Dendritic cell treated with granulocyte-macrophage colony-stimulating factor and Interleukin-4, amounts not matched to agents 40 ng/mL and 50 ng/mL, for 4 days (primary cell): ENCODE measurements at regions of chr1 and their contacts with region 1.

Region 1: GRCh38 chr1:206912445-206913095 is 9.2 kb downstream of the FCMR start:
- H3K4me3 Mint-ChIP-seq: no peak overlapping the region
- H3K27ac Mint-ChIP-seq: no peak overlapping the region
- H3K4me1 Mint-ChIP-seq: peaks cover 10% of the 10 kb centered on the region
- H3K27me3 Mint-ChIP-seq: peaks cover 64% of the 10 kb centered on the region

Region 2: DNA sequence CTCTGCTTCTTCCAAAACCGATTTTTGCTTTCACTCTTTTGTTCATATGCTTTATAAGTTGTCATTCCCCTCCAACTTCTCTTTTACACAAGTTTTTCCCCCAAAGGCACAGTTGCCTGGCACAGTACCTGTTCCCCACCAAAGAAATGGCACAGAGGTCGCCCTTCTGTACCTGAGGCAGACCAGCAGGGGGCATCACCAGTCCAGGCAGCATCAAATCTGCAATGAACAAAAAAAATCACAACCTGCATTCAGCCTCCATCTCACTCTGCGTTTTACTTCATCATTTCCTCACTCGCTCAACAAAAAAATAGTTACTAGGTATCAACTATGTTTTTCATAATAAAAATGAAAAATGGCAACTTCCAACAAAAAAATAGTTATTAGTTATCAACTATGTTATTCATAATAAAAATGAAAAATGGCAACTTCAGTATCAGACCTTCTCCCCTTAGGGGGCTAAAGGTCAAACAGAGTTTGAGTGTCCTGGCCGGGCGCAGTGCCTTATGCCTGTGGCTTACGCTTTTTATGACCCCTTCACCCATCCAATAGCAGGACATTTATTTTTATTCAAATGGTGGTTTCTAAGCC is 304.4 kb before region 1 on chr1:
- intact Hi-C with region 1: loop called (anchors 5 kb)
- H3K4me3 Mint-ChIP-seq: no peak overlapping the region
- H3K27ac Mint-ChIP-seq: no peak overlapping the region
- H3K4me1 Mint-ChIP-seq: peaks cover 22% of the 10 kb centered on the region
- H3K27me3 Mint-ChIP-seq: no peaks in the 10 kb centered on the region

Region 3: DNA sequence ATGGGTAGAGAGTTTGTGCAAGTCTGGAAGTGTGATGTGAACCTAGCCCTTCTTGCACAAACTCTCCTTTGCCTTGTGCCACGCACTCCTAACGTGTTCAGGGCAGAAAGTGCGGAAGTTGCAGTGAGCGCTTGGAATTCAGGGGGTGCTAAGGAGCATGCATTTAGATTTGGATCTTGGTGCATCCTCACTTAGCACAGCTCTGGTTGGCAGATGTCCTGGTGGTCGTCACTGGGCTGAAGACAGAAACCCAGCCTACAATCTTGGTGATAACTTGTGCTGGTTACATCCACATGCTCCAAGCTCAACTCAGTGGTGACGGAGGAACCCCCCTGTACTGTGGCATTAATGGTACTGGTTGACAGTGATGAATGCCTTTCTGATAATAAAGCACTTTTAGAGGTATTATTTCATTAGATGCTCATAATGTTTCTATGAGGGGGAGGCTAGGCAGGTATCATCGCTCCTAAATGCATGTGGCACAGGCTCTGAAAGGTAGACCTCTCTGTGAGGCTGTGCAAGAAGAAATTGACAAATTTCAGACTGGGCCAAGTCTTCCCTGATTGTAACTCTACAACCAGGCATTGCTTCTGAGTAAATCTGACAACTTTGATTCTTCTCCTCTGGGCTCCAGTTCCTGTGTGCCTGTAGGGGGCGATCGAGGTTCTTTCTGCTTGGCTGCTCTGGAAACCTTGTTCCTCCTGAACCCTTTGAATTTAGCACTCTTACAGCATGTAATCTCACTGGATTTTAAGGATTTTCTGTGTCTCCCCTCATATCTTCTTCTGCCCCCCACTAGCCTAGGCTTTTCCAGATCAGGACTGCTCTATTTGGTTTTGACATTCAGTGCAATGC is 187.2 kb before region 1 on chr1:
- intact Hi-C with region 1: loop called (anchors 2 kb)
- H3K4me3 Mint-ChIP-seq: no peak overlapping the region
- H3K27ac Mint-ChIP-seq: no peak overlapping the region
- H3K4me1 Mint-ChIP-seq: peaks cover 78% of the 10 kb centered on the region
- H3K27me3 Mint-ChIP-seq: no peaks in the 10 kb centered on the region

Region 4: DNA sequence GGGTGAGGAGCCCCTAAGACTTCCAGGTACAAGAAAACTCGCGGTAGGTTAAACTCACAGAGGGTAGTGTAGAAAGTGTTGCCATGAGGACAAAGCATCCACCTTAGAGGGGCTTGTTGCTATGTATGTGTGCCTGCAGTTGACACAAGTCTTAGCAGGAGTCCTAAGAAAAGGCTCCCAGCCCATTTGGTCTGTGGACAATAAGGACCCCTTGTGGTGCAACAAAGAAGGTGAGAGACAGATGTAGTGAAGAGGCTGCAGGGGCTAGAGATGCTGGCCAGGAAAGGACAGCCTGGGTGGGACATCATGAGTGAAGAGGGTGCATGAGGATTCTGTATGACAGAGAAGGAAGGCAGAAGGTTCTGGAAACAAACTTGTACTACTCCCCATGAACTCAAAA is 104.0 kb before region 1 on chr1:
- intact Hi-C with region 1: loop called (anchors 1 kb)
- H3K4me3 Mint-ChIP-seq: no peak overlapping the region
- H3K27ac Mint-ChIP-seq: no peak overlapping the region
- H3K4me1 Mint-ChIP-seq: peaks cover 18% of the 10 kb centered on the region
- H3K27me3 Mint-ChIP-seq: peaks cover 1% of the 10 kb centered on the region

Region 5: GRCh38 chr1:206982216-206982615 is 69.6 kb after region 1 on chr1:
- intact Hi-C with region 1: loop called (anchors 1 kb)
- H3K4me3 Mint-ChIP-seq: no peak overlapping the region
- H3K27ac Mint-ChIP-seq: no peak overlapping the region
- H3K4me1 Mint-ChIP-seq: no peaks in the 10 kb centered on the region
- H3K27me3 Mint-ChIP-seq: peaks cover 27% of the 10 kb centered on the region